ENCODE measurements at regions of chr5 and their contacts with region 1.

Region 1: GRCh38 chr5:154608531-154609011 is 130.5 kb upstream of the HAND1 start:
- DNase-seq: no peak
- H3K4me3 ChIP-seq: no peak overlapping the region
- H3K27ac ChIP-seq: no peak overlapping the region
- H3K4me1 ChIP-seq: peaks cover 13% of the 10 kb centered on the region
- H3K27me3 ChIP-seq: peaks cover 80% of the 10 kb centered on the region
- CTCF ChIP-seq: no peak

Region 2: DNA sequence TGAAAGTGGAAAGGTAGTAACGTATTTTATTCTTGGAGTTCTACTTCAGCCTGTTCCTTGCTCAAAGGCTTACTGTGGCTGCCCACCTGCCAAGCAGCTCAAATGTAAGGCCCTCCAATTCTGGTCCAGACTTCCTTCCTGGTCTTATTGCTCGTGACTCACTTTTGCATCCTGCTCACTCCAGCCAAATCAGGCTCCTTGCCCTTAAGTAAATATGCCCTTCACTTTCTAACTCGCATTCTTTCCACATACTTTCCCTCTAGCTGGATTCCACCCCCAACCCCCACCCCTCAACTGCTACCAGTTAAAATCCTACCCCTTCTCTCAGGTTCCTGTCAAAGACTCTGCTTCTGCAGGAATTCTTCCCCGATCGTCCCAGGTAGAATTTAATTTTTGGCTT is 321.4 kb before region 1 on chr5:
- intact Hi-C with region 1: no loop called
- DNase-seq: no peak
- H3K4me3 ChIP-seq: no peak overlapping the region
- H3K27ac ChIP-seq: peak overlapping the region; percentile 61
- H3K4me1 ChIP-seq: peaks cover 43% of the 10 kb centered on the region
- H3K27me3 ChIP-seq: no peaks in the 10 kb centered on the region
- CTCF ChIP-seq: no peak

Region 3: DNA sequence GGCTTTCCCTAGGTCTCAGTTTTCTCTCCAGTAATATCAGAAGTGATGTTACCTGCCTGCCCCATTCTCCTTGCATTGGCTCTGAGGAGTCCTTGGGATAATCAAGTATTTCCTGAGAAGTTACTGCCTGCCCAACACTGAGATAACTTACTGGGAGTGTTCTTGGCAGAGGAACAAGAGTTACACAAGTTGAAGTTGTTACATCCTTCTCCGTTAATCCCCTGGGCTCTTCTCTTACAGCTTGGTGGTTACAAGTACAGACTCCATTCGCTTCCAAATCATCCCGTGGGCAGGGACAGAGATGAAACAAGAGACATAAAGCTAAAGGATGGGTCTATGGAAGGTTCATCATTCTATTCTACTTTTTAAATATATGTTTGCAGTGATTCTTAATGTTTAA is 236.9 kb before region 1 on chr5:
- intact Hi-C with region 1: no loop called
- DNase-seq: no peak
- H3K4me3 ChIP-seq: no peak overlapping the region
- H3K27ac ChIP-seq: peak overlapping the region; percentile 47
- H3K4me1 ChIP-seq: peaks cover 60% of the 10 kb centered on the region
- H3K27me3 ChIP-seq: no peaks in the 10 kb centered on the region
- CTCF ChIP-seq: no peak

Region 4: GRCh38 chr5:154467655-154468354 is 140.8 kb before region 1 on chr5:
- intact Hi-C with region 1: loop called (anchors 5 kb)
- DNase-seq: peak; percentile 76
- H3K4me3 ChIP-seq: no peak overlapping the region
- H3K27ac ChIP-seq: peak overlapping the region; percentile 35
- H3K4me1 ChIP-seq: peaks cover 21% of the 10 kb centered on the region
- H3K27me3 ChIP-seq: peaks cover 52% of the 10 kb centered on the region
- CTCF ChIP-seq: peak; percentile 96

Region 5: DNA sequence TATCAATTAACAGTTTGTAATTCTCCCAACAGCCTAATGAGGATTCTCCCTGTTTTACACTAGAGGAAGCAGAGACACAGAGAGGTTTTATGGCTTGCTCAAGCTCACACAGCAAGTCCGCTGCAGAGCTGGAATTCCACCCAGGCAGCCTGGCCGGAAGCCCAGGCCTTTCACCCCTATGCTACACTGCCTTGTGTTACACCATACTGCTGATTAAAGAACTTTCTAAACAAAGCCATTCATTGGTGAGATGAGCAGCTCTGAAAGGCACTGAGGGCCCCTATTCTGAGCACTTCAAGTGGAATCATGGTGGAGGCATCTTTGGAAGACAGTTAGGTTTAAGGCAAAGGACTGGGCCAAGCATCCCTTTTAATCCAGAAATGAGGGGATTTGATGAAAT is 131.9 kb after region 1 on chr5:
- intact Hi-C with region 1: no loop called
- DNase-seq: peak; percentile 72
- H3K4me3 ChIP-seq: no peak overlapping the region
- H3K27ac ChIP-seq: peak overlapping the region; percentile 74
- H3K4me1 ChIP-seq: peaks cover 26% of the 10 kb centered on the region
- H3K27me3 ChIP-seq: no peaks in the 10 kb centered on the region
- CTCF ChIP-seq: no peak